ENCODE measurements at regions of chr5 and their contacts with region 1.

Region 1: DNA sequence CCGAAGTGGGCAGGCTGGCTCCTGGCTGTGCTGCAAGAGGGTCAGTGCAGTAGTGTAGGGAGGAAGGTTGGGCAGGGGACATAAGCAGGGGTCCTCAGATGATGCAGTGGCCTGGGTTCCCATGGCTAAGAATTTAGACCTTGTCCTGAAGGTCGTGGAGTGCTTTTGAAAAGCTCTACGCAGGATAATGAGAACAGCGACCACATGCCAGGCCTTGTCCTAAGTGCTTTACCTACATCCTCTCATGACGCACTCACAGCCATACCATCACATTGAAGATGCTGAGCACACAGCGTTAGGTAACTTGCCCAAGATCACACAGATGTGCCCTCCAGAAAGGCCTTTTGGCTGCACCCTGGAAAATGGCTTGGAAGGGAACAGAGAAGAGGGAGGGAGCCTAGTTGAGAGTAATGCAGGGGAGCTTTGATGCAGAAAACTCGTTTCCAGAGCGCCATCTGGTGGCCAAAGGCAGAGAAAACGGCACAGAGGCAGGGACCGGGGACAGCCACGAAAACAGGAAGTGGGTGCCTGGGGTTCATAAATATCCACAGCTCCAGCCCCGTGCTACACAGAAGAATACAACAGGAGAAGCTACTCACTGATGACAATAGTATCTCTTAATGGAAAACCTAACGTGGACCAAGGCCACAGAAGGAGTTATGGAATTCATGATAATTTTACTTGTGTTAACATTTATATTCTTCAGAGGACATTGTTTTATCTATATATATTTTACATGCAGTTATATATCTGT is 2.6 kb upstream of the PCDH12 start:
- DNase-seq: peak; percentile 51 to 94
- H3K4me3 ChIP-seq: peak overlapping the region in 1 of 2 donors; percentile 30
- H3K27ac ChIP-seq: peak overlapping the region in 1 of 2 donors; percentile 22
- H3K4me1 ChIP-seq: no peaks in the 10 kb centered on the region
- H3K27me3 ChIP-seq: no peaks in the 10 kb centered on the region
- CTCF ChIP-seq: peak; percentile 67 to 84 (median 84)

Region 2: GRCh38 chr5:141691867-141692532 is 268.6 kb before region 1 on chr5:
- intact Hi-C with region 1: loop called (anchors 1 kb)
- DNase-seq: peak in 1 of 2 donors; percentile 87
- H3K4me3 ChIP-seq: peak overlapping the region in 1 of 2 donors; percentile 41
- H3K27ac ChIP-seq: no peak overlapping the region
- H3K4me1 ChIP-seq: no peaks in the 10 kb centered on the region
- H3K27me3 ChIP-seq: no peaks in the 10 kb centered on the region
- CTCF ChIP-seq: peak; percentile 88 to 99 (median 96)

Region 3: GRCh38 chr5:141878711-141879425 is 81.8 kb before region 1 on chr5:
- intact Hi-C with region 1: loop called (anchors 5 kb)
- DNase-seq: peak; percentile 72 to 94
- H3K4me3 ChIP-seq: peak overlapping the region; percentile 70 to 77
- H3K27ac ChIP-seq: peak overlapping the region; percentile 28 to 58
- H3K4me1 ChIP-seq: peaks cover 13 to 28% of the 10 kb centered on the region in 2 donors
- H3K27me3 ChIP-seq: peaks cover 17% of the 10 kb centered on the region
- CTCF ChIP-seq: peak; percentile 90 to 94 (median 93)

Region 4: GRCh38 chr5:141889282-141889871 is 71.2 kb before region 1 on chr5:
- intact Hi-C with region 1: loop called (anchors 2 kb)
- DNase-seq: no peak
- H3K4me3 ChIP-seq: no peak overlapping the region
- H3K27ac ChIP-seq: no peak overlapping the region
- H3K4me1 ChIP-seq: no peaks in the 10 kb centered on the region
- H3K27me3 ChIP-seq: no peaks in the 10 kb centered on the region
- CTCF ChIP-seq: peak in 2 of 3 experiments; percentile 7 to 40

Region 5: DNA sequence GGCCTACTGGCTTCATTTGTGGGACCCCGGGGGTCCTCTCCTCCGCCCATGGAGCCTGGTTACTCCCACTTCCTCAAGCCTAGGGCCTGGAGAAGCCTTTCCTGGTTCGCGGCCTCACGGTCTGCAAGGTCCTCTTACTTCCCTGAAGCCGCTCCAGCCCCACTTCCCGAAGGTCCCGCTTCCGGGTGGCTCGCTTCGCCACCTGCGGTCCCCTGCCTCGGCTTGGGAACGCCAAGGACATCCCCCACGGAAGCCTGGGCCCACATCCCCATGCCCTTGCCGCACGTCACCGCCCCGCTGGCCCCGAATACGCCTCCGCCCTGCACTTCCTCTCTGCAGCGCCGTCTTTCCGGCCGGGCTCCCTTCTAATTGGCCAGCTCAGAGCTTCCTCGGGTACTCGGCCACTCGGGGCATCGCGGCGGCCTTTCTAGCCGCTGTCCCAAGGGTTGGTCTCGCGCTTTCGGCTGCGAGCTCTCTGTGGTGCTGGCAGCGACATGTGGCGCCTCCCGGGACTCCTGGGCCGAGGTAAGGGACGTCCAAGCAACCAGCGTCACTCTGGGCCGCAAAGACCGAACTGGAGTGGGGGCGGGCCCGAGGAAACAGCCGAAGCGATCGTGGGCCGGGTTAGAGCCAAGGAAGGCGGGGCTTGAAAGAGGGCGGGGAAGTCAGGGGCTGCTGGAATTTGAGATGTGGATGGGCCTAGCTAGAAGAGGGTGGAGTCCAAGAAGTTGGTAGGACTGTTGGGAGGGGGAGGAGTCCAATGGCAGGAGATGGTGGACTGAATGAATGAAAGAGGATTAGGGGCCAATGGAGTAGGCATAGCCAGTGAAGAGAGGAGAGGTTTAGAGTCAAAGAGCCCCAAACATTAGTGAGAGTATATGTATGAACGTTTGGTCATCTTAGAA is 36.9 kb before region 1 on chr5 and contains the start of gene DELE1:
- intact Hi-C with region 1: loop called (anchors 1 kb)
- DNase-seq: peak; percentile 84 to 98
- H3K4me3 ChIP-seq: peak within 1 kb of the TSS; percentile 70 to 79
- H3K27ac ChIP-seq: peak within 1 kb of the TSS; percentile 96 to 97
- H3K4me1 ChIP-seq: peaks cover 8 to 13% of the 10 kb centered on the region in 2 donors
- H3K27me3 ChIP-seq: no peaks in the 10 kb centered on the region
- CTCF ChIP-seq: no peak
- total RNA-seq, gene DELE1: 40.7 TPM

Measured in ascending aorta (tissue), 2 donors.